ENCODE measurements at regions of chrX and their contacts with region 1.

Region 1: GRCh38 chrX:120499301-120500072 is 30.4 kb upstream of the LAMP2 start:
- DNase-seq: peak in 2 of 3 donors; percentile 20 to 55
- ATAC-seq: no peak
- H3K4me3 ChIP-seq: no peak overlapping the region
- H3K27ac ChIP-seq: no peak overlapping the region
- H3K4me1 ChIP-seq: no peaks in the 10 kb centered on the region
- H3K27me3 ChIP-seq: no peaks in the 10 kb centered on the region

Region 2: DNA sequence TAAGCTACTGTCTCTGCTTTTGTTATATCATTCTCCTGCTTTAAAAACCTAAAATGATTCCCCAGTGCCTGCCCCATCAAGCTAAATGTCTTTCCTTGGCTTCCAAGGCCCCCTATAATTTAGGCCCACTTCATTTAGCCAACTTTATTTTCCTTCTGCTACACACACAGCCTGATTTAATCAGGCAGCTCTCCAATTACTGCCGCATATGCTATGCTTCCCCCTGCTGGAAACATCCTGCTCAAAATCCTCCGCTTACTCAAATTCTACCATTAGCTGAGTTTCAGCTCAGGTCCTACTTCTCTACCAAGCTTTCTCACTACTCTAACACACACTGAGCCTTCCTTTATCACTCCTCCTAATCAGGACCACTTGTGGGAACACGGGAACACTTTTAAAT is 47.4 kb before region 1 on chrX:
- intact Hi-C with region 1: no loop called
- DNase-seq: no peak
- ATAC-seq: peak in 1 of 2 donors; percentile 26
- H3K4me3 ChIP-seq: no peak overlapping the region
- H3K27ac ChIP-seq: no peak overlapping the region
- H3K4me1 ChIP-seq: no peaks in the 10 kb centered on the region
- H3K27me3 ChIP-seq: no peaks in the 10 kb centered on the region

Region 3: DNA sequence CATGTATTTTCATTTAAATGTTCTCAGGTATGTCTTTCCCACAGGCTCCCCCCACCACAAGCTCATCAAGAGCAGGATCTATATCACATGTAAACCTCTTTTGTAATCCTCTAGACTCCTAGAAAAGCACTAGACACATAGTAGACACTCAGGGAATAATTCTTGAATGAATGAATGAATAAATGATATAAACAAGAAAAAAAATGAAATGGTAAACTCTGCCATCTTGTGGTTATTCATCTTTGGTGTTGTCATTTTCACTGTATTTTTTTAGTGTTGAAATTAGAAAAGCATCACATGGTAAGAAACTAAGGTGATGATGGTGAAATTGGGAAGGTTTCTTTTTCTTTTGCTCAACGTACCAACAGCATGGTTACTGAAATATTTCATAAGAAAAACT is 164.6 kb after region 1 on chrX:
- intact Hi-C with region 1: loop called in 2 of 4 experiments (anchors 5 to 10 kb)
- DNase-seq: no peak
- ATAC-seq: no peak
- H3K4me3 ChIP-seq: no peak overlapping the region
- H3K27ac ChIP-seq: no peak overlapping the region
- H3K4me1 ChIP-seq: no peaks in the 10 kb centered on the region
- H3K27me3 ChIP-seq: no peaks in the 10 kb centered on the region

Region 4: DNA sequence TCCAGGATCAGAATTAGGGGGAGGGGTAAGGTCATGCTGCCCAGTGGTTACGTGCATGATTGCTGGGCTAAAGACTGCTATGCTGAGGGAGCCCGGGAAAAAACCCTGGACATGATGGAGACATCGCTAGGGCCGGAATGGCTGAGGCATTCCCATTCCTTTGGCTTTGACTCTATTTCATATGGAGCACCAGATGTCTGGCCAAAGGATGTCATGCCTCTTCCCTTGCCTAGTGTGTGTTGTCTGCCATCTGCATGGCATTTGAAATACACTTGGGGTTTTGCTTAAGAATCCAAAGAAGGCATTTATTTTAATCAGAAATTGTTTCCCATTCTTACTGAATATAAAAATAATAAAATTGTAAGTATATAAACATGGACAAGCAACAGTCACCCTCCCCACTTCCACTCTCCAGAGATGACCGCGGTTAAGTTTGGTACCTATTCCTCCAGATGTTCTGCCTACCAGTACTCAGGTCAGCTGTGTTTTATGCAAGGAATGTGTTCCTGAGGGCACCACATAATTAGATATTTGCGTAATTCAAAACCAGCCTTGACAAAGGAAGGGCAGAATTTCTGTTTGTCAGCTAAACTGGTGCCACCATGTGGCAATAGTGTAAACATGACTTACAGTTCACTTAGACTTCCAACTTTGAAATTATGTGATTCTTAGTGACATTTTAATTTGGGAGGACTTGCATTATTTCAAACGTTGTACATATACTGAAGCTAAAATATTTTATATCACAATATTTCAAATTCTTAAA is 270.3 kb after region 1 on chrX:
- intact Hi-C with region 1: loop called in 3 of 4 experiments (anchors 5 to 10 kb)
- DNase-seq: no peak
- ATAC-seq: peak in 1 of 2 donors; percentile 36
- H3K4me3 ChIP-seq: no peak overlapping the region
- H3K27ac ChIP-seq: no peak overlapping the region
- H3K4me1 ChIP-seq: no peaks in the 10 kb centered on the region
- H3K27me3 ChIP-seq: no peaks in the 10 kb centered on the region

Measured in right cardiac atrium (tissue), 5 donors.